ENCODE measurements at regions of chr1 and their contacts with region 1.

Region 1: GRCh38 chr1:244864253-244865027 is at the start of gene HNRNPU:
- DNase-seq: peak; percentile 99
- H3K4me3 Mint-ChIP-seq: peak within 1 kb of the TSS; percentile 89
- H3K27ac Mint-ChIP-seq: peak within 1 kb of the TSS; percentile 89
- H3K4me1 Mint-ChIP-seq: peaks cover 26% of the 10 kb centered on the region
- H3K27me3 Mint-ChIP-seq: no peaks in the 10 kb centered on the region
- CTCF ChIP-seq: peak; percentile 48
- total RNA-seq, gene HNRNPU: 418 and 453 TPM in 2 replicates

Region 2: GRCh38 chr1:244461245-244462071 is 403.0 kb before region 1 on chr1 and contains the start of gene CATSPERE:
- CTCF ChIA-PET with region 1: no interaction called
- intact Hi-C with region 1: no loop called
- DNase-seq: peak; percentile 91
- H3K4me3 Mint-ChIP-seq: peak within 1 kb of the TSS; percentile 63
- H3K27ac Mint-ChIP-seq: peak within 1 kb of the TSS; percentile 66
- H3K4me1 Mint-ChIP-seq: peaks cover 31% of the 10 kb centered on the region
- H3K27me3 Mint-ChIP-seq: no peaks in the 10 kb centered on the region
- CTCF ChIP-seq: no peak
- total RNA-seq, gene CATSPERE: 0.49 and 1.3 TPM in 2 replicates

Region 3: DNA sequence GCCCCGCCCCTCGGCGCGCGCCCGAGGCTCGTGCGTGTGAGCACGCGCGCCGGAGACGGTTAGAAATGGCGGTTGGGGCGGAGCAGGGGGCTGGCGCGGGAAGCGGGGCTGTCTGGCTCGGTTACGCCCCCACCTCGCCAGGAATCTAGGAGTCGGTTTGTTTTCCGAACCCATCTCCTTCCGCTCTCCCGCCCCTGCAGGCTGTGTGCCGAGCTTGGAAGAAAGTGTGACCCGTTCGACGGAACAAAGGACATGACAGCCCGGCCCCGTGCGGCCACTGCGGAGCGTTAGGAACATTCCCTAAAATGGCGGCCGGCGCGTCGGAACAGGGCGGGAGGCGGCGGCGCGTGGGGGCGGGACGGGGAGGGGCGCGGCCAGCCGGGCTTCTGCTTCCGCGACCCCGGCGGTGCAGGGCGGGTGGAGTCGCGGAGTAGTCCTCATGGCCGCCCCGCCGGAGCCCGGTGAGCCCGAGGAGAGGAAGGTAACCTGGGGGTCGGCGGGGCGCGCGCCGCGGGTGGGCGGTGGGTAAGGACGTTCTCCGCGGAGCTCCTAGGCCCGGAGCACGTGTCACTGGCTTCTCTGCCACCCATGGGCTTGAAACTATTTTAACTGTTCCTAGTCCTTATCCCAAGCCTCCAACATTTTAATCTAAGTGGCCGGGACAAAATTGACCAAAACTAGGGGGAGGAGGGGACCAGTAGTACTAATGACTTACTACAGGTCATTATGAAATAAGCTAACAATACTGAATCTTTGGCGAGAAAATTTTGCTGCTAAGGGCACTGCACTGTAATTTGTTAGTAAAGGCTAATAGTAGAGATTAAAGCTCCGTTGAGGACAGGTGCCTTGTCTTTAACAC is 28.9 kb before region 1 on chr1 and contains the start of gene COX20:
- CTCF ChIA-PET with region 1: interaction called, 5 read pairs
- intact Hi-C with region 1: loop called (anchors 2 kb)
- DNase-seq: peak; percentile 84
- H3K4me3 Mint-ChIP-seq: peak within 1 kb of the TSS; percentile 84
- H3K27ac Mint-ChIP-seq: peak within 1 kb of the TSS; percentile 100
- H3K4me1 Mint-ChIP-seq: peaks cover 59% of the 10 kb centered on the region
- H3K27me3 Mint-ChIP-seq: no peaks in the 10 kb centered on the region
- CTCF ChIP-seq: no peak
- total RNA-seq, gene COX20: 22.6 and 32.8 TPM in 2 replicates

Region 4: DNA sequence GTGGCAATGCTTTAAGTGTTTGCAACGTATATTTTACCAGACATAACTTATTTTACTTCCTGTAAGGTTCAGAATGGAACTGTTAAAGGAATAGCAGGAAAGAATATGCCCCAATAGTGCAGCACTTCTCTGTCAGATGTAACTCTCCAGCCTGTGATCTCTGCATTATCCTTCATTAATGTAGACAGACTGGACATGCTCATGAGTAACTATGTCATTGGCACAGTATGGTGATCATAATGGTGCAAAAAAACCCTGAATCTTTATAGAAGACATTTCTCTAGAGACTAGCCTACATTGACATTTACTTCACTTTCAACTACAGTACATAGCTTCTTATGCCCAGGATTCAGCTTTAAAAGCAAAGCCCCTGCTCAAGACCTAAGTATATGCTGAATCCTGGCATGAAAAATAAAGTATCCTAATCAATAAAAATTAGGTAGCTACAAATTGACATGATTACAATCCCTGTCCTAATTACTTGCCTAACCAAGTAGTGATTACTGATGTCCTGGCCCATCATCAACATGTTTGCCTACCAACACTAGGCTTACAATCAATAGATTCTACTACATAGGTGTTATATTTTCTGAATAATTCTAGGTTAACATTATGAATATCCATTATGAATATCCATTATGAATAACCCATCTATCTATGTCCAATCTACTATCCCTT is 15.1 kb before region 1 on chr1:
- CTCF ChIA-PET with region 1: interaction called, 10 read pairs
- intact Hi-C with region 1: no loop called
- DNase-seq: no peak
- H3K4me3 Mint-ChIP-seq: peak overlapping the region; percentile 16
- H3K27ac Mint-ChIP-seq: peak overlapping the region; percentile 91
- H3K4me1 Mint-ChIP-seq: peaks cover 15% of the 10 kb centered on the region
- H3K27me3 Mint-ChIP-seq: no peaks in the 10 kb centered on the region
- CTCF ChIP-seq: no peak

Region 5: GRCh38 chr1:244970661-244971551 is 106.5 kb after region 1 on chr1:
- CTCF ChIA-PET with region 1: interaction called, 13 read pairs
- intact Hi-C with region 1: loop called (anchors 1 kb)
- DNase-seq: peak; percentile 97
- H3K4me3 Mint-ChIP-seq: peak overlapping the region; percentile 96
- H3K27ac Mint-ChIP-seq: peak overlapping the region; percentile 100
- H3K4me1 Mint-ChIP-seq: peaks cover 20% of the 10 kb centered on the region
- H3K27me3 Mint-ChIP-seq: no peaks in the 10 kb centered on the region
- CTCF ChIP-seq: peak; percentile 58

Region 6: DNA sequence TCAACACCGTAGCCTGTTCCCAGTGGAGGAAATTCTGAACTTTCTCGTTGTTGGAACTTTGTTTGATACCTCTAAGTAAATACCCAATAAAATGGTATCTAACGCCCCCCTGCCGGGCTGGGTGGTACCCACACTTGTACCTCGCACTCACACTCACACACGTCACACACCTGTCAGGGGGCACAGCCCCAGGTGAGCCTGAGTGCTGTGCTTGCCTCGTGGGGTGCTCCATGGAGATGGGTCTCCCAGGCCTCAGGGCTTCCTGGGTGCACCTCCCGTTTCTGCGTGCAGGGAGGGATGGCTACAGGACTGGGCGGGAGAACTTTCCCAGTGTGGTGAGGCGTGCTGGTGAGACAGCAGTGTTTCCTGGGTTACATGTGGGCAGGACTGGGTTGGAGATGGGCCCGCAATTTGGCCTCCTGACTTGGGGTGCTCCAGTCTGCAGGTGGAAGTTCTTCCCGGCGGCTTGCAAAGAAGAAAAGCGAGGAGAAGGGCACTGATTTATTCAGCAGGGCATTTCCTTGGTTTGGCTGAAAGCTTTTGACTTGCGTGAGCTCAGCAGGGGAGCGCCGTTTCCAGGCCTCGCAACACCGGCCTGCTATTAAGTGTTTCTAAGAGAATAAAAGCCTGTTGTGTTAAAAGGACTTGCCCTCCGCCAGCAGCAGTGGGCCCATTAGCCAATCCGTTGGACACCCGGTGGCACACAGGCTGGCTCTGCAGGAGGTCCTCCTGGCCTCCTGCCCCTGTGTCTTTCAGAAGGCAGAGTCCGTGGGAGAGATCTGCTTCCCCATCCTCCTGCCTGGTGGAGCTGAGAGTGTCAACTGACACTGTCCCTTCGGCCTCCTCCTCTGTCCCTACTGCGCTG is 370.0 kb after region 1 on chr1:
- CTCF ChIA-PET with region 1: no interaction called
- intact Hi-C with region 1: no loop called
- DNase-seq: no peak
- H3K4me3 Mint-ChIP-seq: no peak overlapping the region
- H3K27ac Mint-ChIP-seq: no peak overlapping the region
- H3K4me1 Mint-ChIP-seq: no peaks in the 10 kb centered on the region
- H3K27me3 Mint-ChIP-seq: no peaks in the 10 kb centered on the region
- CTCF ChIP-seq: no peak